Right ventricle myocardium inferior (tissue), 1 donor: ENCODE measurements at regions of chr19 and their contacts with region 1.

Region 1: DNA sequence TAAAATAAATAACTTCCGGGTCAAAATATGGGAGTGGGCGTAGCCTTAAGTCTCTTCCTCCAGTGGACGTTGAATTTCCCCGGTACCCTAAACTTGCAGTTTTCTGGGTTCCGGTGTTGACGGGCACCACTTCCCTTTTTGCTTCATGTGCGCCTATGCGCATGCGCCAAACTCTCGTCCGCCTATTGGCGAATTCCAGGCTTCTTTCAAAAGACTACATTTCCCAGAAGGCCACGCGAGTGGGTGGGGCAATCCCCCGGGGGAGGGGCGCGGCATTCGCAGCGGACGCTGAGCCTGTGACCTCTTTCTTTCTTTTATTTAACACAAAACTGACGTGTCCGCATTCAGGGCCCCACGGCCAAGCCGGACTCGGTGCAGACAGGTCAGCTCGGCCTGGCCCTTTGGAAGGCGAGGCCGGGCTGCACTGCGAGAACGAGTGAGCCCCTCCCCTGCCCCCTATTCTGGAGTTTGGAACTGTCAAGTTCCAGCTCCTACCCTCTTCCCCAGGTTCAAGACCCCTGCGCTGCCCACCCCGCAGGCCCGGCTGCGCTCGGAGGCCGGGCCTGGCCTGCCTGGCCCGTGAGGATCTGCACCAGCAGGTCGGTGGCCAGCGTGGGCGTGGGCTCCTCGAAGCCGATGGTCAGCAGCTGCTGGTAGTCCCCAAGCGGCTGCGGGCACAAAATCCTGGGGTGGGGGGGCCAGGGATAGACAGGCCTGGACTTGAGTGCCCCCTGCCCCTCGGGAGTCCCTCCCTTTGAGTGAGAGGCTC is 4.1 kb downstream of the C19orf67 start:
- DNase-seq: peak; percentile 98
- ATAC-seq: peak; percentile 96

Region 2: GRCh38 chr19:14006243-14006765 is 75.2 kb before region 1 on chr19 and contains the start of gene RFX1:
- intact Hi-C with region 1: loop called (anchors 2 kb)
- DNase-seq: peak; percentile 100
- ATAC-seq: peak; percentile 88
- total RNA-seq, gene RFX1: 15.4 TPM

Region 3: GRCh38 chr19:14117668-14118164 is 36.2 kb after region 1 on chr19 and contains the start of gene PRKACA:
- intact Hi-C with region 1: loop called (anchors 5 kb)
- DNase-seq: peak; percentile 100
- ATAC-seq: peak; percentile 90
- total RNA-seq, gene PRKACA: 494 TPM

Region 4: GRCh38 chr19:14136509-14137281 is 55.2 kb after region 1 on chr19 and contains the start of gene ASF1B:
- intact Hi-C with region 1: loop called (anchors 2 kb)
- DNase-seq: peak; percentile 99
- ATAC-seq: peak; percentile 96
- total RNA-seq, gene ASF1B: 2.0 TPM

Region 5: DNA sequence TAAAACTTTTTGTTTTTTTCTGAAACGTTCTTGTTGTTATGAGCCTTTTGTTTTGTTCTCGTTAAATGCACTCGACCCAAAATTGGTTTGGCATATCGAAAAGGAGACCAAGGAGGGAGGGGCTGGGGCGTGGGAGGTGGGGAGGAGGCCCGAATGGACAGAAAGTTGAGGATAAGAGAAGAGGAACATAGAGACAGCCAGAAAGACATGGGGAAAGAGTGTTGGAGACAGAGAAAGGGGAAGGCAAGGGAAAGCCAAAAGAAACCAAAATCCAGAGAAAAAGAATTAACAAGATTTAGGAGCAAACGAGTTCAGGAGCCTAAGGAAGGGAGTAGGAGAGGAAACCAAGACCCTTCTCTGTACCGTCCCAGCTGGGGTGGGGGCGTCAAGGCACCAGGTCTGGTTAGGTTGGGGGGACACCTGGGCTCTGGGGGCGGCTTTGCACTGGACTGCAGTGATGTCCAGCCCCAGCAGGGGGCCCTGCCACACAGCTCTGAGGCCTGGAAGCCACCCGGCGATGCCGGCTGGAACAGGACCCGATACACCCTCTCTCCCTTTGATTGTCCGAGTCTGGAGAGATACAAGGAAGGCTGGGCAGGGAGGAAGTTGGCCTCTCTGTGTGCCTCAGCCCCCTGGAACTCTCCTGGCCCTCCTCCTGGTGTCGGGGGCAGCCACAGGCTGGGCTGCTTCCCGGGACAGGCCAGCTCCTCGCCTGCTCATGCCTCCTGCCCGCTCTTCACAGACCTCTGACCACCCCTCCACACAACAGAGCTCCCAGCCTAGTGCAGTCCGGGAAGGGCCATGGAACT is 66.5 kb after region 1 on chr19:
- intact Hi-C with region 1: no loop called
- DNase-seq: peak; percentile 83
- ATAC-seq: peak; percentile 83